Mammary epithelial cell (primary cell): ENCODE measurements at regions of chr9 and their contacts with region 1.

Region 1: GRCh38 chr9:108671176-108671575 is 184.6 kb downstream of the ACTL7B start:
- DNase-seq: peak; percentile 58
- H3K4me3 ChIP-seq: no peak overlapping the region
- H3K27ac ChIP-seq: peak overlapping the region; percentile 73
- H3K4me1 ChIP-seq: peaks cover 35% of the 10 kb centered on the region
- H3K27me3 ChIP-seq: no peaks in the 10 kb centered on the region
- CTCF ChIP-seq: peak; percentile 68 to 78

Region 2: GRCh38 chr9:107421947-107422793 is 1249.0 kb before region 1 on chr9:
- CTCF ChIA-PET with region 1: no interaction called
- dilution Hi-C with region 1: no loop called
- in situ Hi-C with region 1: no loop called
- intact Hi-C with region 1: loop called (anchors 1 kb)
- DNase-seq: peak; percentile 59
- H3K4me3 ChIP-seq: no peak overlapping the region
- H3K27ac ChIP-seq: no peak overlapping the region
- H3K4me1 ChIP-seq: peaks cover 3% of the 10 kb centered on the region
- H3K27me3 ChIP-seq: no peaks in the 10 kb centered on the region
- CTCF ChIP-seq: peak; percentile 65 to 81

Region 3: GRCh38 chr9:107484117-107484723 is 1187.0 kb before region 1 on chr9:
- CTCF ChIA-PET with region 1: interaction called, 4 read pairs
- dilution Hi-C with region 1: no loop called
- in situ Hi-C with region 1: no loop called
- intact Hi-C with region 1: loop called (anchors 1 kb)
- DNase-seq: peak; percentile 60
- H3K4me3 ChIP-seq: no peak overlapping the region
- H3K27ac ChIP-seq: no peak overlapping the region
- H3K4me1 ChIP-seq: peaks cover 27% of the 10 kb centered on the region
- H3K27me3 ChIP-seq: no peaks in the 10 kb centered on the region
- CTCF ChIP-seq: peak; percentile 34 to 63

Region 4: GRCh38 chr9:108478431-108478837 is 192.7 kb before region 1 on chr9:
- CTCF ChIA-PET with region 1: no interaction called
- dilution Hi-C with region 1: no loop called
- in situ Hi-C with region 1: no loop called
- intact Hi-C with region 1: loop called (anchors 5 kb)
- DNase-seq: peak; percentile 94
- H3K4me3 ChIP-seq: no peak overlapping the region
- H3K27ac ChIP-seq: peak overlapping the region; percentile 95
- H3K4me1 ChIP-seq: peaks cover 48% of the 10 kb centered on the region
- H3K27me3 ChIP-seq: no peaks in the 10 kb centered on the region
- CTCF ChIP-seq: peak in 1 of 2 donors; percentile 23

Region 5: GRCh38 chr9:108813951-108814601 is 142.9 kb after region 1 on chr9:
- CTCF ChIA-PET with region 1: no interaction called
- dilution Hi-C with region 1: no loop called
- in situ Hi-C with region 1: no loop called
- intact Hi-C with region 1: loop called (anchors 1 kb)
- DNase-seq: peak; percentile 71
- H3K4me3 ChIP-seq: no peak overlapping the region
- H3K27ac ChIP-seq: no peak overlapping the region
- H3K4me1 ChIP-seq: peaks cover 14% of the 10 kb centered on the region
- H3K27me3 ChIP-seq: no peaks in the 10 kb centered on the region
- CTCF ChIP-seq: peak; percentile 84 to 85